Calu3 (cell line): ENCODE measurements at regions of chr3 and their contacts with region 1.

Region 1: GRCh38 chr3:157263027-157263426 is 103.1 kb upstream of the CCNL1 start:
- DNase-seq: peak; percentile 26
- H3K4me3 Mint-ChIP-seq: no peak overlapping the region
- H3K27ac Mint-ChIP-seq: peak overlapping the region; percentile 30
- H3K4me1 Mint-ChIP-seq: peaks cover 8% of the 10 kb centered on the region
- H3K27me3 Mint-ChIP-seq: no peaks in the 10 kb centered on the region
- CTCF ChIP-seq: no peak

Region 2: DNA sequence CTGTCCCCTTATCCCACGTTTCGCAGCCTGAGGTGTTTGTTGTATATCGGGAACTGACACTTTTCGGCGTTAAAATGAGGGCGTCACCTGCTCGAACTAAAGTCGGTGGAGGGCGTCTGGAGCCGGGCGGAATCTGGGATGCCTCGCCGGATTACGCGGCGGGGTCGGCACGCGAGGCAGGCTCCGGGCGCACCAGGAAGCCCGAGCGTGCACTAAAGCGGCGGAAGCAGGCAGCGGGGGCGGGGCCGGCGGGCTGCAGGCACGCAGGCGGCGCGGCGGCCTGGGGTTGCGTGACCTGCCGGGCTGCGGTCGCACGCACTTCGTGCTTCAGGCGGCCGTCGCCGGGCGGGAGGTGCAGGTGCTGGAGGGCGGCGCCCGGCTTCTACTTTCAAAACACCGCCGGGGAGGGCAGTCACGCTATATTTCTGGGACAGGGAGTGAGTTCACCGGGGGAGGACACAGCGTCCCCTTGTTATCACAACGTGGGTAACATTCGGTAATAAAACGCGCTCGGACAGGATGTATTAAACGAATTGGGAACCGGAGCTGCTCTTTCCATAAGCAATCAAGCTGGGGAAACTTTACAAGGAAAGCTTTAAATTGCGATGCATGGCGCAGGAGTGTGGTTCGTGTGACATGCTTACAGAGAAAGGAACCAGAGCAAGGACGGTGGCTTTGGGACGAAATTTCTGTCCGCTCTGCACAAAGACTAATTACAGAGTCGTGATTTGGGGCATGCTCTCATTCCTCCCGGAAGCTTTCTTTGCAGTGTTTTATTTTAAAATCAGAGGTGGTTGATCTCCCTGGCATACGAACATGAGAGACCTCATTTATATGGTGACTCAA is 446.0 kb before region 1 on chr3:
- CTCF ChIA-PET with region 1: no interaction called
- intact Hi-C with region 1: no loop called
- DNase-seq: peak; percentile 99
- H3K4me3 Mint-ChIP-seq: peak overlapping the region; percentile 94
- H3K27ac Mint-ChIP-seq: peak overlapping the region; percentile 96
- H3K4me1 Mint-ChIP-seq: peaks cover 64% of the 10 kb centered on the region
- H3K27me3 Mint-ChIP-seq: no peaks in the 10 kb centered on the region
- CTCF ChIP-seq: no peak

Region 3: GRCh38 chr3:157182881-157183280 is 80.1 kb before region 1 on chr3:
- CTCF ChIA-PET with region 1: no interaction called
- intact Hi-C with region 1: no loop called
- DNase-seq: no peak
- H3K4me3 Mint-ChIP-seq: no peak overlapping the region
- H3K27ac Mint-ChIP-seq: no peak overlapping the region
- H3K4me1 Mint-ChIP-seq: no peaks in the 10 kb centered on the region
- H3K27me3 Mint-ChIP-seq: no peaks in the 10 kb centered on the region
- CTCF ChIP-seq: no peak

Region 4: DNA sequence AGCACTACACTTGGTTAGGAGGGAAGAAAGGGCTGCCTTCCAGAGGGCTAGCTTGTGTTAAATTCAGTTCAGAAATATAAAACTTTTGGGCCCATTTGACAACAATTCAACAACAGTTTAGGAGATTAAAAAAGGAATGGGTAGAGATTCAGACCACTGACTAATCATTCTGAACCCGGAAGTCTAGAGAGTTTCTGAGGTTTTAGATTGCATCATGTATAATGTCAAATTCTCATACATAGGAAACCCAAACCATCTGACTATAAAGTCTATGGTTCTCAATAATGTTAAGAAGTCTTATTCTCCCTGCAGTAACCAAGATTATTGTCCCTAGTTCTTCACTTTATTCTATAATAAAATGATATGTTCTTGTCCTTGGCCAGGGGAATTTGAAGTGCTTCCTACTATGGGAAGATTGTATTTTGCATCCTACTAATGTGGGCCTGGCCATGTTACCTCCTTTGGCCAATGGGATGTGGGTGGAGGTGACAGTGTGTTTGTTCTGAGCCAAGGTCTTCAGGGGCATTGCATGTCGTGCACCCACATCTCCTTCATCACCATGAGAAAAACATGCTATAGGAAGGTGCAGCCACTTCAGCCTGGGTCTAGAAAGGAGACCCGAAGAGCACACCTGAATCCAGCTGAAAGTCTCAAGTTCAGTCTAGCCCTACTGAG is 36.7 kb before region 1 on chr3:
- CTCF ChIA-PET with region 1: no interaction called
- intact Hi-C with region 1: loop called (anchors 2 kb)
- DNase-seq: no peak
- H3K4me3 Mint-ChIP-seq: no peak overlapping the region
- H3K27ac Mint-ChIP-seq: peak overlapping the region; percentile 39
- H3K4me1 Mint-ChIP-seq: no peaks in the 10 kb centered on the region
- H3K27me3 Mint-ChIP-seq: no peaks in the 10 kb centered on the region
- CTCF ChIP-seq: no peak

Region 5: DNA sequence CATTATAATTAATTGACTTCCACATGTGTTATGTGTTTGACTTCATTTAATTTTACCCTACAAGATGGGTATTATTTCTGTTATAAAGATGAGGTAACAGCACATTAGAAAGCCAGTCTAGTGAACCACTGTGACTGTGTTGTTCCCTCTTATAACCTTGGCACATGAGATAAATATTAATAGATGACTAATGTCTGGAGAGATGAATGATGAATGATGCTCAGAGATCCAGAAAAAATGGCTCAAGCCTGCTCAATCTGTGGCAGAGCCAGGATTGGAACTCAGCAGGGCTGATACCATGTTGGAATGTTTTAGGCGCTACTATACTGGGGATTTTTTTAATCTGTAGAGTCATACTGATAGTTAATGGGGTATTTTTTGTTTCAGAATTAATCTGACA is 54.9 kb after region 1 on chr3:
- CTCF ChIA-PET with region 1: interaction called, 3 read pairs
- intact Hi-C with region 1: loop called (anchors 1 kb)
- DNase-seq: no peak
- H3K4me3 Mint-ChIP-seq: peak overlapping the region; percentile 4
- H3K27ac Mint-ChIP-seq: peak overlapping the region; percentile 60
- H3K4me1 Mint-ChIP-seq: peaks cover 33% of the 10 kb centered on the region
- H3K27me3 Mint-ChIP-seq: no peaks in the 10 kb centered on the region
- CTCF ChIP-seq: no peak

Region 6: DNA sequence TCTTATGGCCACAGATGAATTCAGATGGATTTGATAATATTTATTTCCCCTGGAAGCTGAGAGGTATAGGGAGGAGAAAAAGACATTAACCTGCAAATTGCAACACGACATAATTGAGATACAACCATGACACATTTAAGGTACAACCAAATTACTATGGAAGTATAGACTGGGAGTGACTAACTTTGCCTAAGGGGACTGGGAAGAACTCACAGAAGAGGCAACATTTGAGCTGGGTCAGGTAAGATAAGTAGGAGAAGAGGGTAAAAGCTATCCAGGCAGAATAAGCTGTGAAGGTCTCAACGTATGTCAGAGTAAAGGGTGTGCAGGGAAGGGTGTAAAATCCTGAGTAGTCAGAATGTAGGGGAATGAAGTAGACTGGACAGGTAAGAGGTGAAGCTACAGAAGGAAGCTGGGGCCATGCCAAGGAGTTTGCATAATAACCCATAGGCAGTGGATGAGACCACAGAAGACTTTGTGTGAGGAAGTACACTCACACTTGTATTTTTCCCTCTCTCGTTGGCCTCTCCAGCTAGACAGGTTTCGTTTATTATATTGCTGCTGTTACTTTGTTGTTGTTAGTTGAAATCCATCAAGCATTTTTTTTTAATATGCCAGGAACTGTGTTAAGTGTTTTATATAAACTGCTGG is 145.6 kb after region 1 on chr3:
- CTCF ChIA-PET with region 1: no interaction called
- intact Hi-C with region 1: no loop called
- DNase-seq: peak; percentile 61
- H3K4me3 Mint-ChIP-seq: no peak overlapping the region
- H3K27ac Mint-ChIP-seq: no peak overlapping the region
- H3K4me1 Mint-ChIP-seq: peaks cover 16% of the 10 kb centered on the region
- H3K27me3 Mint-ChIP-seq: no peaks in the 10 kb centered on the region
- CTCF ChIP-seq: no peak

Region 7: DNA sequence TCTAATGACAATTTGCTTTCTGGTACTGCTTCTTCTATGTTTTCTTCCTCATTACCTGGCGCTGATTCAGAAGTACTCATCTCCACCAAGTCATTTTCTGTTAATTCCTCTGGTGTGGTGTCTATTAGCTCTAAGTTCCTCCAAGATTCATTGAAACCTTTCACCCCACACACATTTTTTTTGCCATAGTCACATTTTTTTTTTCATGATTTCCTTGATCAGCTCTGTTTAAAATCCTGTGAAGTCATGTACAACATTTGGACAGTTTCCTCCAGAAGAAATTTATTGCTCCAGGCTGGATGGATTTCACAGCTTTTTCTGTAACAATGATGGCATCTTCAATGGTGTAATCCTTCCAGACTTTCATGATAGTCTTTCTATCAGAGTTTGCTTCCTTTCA is 483.4 kb after region 1 on chr3:
- CTCF ChIA-PET with region 1: no interaction called
- intact Hi-C with region 1: no loop called
- DNase-seq: no peak
- H3K4me3 Mint-ChIP-seq: no peak overlapping the region
- H3K27ac Mint-ChIP-seq: no peak overlapping the region
- H3K4me1 Mint-ChIP-seq: no peaks in the 10 kb centered on the region
- H3K27me3 Mint-ChIP-seq: no peaks in the 10 kb centered on the region
- CTCF ChIP-seq: no peak